PC-3 (cell line): ENCODE measurements at regions of chr18 and their contacts with region 1.

Region 1: GRCh38 chr18:31325051-31325450 is 7.1 kb downstream of the DSG1 start:
- DNase-seq: peak; percentile 75
- ATAC-seq: peak; percentile 86
- H3K4me3 ChIP-seq: no peak overlapping the region
- H3K27ac ChIP-seq: peak overlapping the region; percentile 74
- H3K4me1 ChIP-seq: peaks cover 11% of the 10 kb centered on the region
- H3K27me3 ChIP-seq: no peaks in the 10 kb centered on the region
- CTCF ChIP-seq: no peak

Region 2: GRCh38 chr18:31512203-31512764 is 187.2 kb after region 1 on chr18:
- CTCF ChIA-PET with region 1: no interaction called
- POLR2A ChIA-PET with region 1: no interaction called
- intact Hi-C with region 1: loop called (anchors 5 kb)
- DNase-seq: peak; percentile 67
- ATAC-seq: peak; percentile 83
- H3K4me3 ChIP-seq: no peak overlapping the region
- H3K27ac ChIP-seq: peak overlapping the region; percentile 83
- H3K4me1 ChIP-seq: peaks cover 45% of the 10 kb centered on the region
- H3K27me3 ChIP-seq: no peaks in the 10 kb centered on the region
- CTCF ChIP-seq: no peak